Endothelial cell of umbilical vein (primary cell): ENCODE measurements at regions of chr16 and their contacts with region 1.

Region 1: GRCh38 chr16:81996664-81997622 is 14.3 kb downstream of the SDR42E1 start:
- DNase-seq: peak; percentile 90
- H3K4me3 ChIP-seq: peak overlapping the region in 1 of 3 experiments; percentile 33
- H3K27ac ChIP-seq: peak overlapping the region; percentile 96
- H3K4me1 ChIP-seq: peaks cover 41% of the 10 kb centered on the region
- H3K27me3 ChIP-seq: no peaks in the 10 kb centered on the region
- CTCF ChIP-seq: peak; percentile 34 to 39
- POLR2A ChIP-seq: no peak

Region 2: GRCh38 chr16:81885976-81886586 is 110.9 kb before region 1 on chr16:
- CTCF ChIA-PET with region 1: interaction called, 15 read pairs
- POLR2A ChIA-PET with region 1: no interaction called
- dilution Hi-C with region 1: no loop called
- intact Hi-C with region 1: loop called (anchors 1 kb)
- DNase-seq: peak; percentile 40
- H3K4me3 ChIP-seq: no peak overlapping the region
- H3K27ac ChIP-seq: no peak overlapping the region
- H3K4me1 ChIP-seq: no peaks in the 10 kb centered on the region
- H3K27me3 ChIP-seq: no peaks in the 10 kb centered on the region
- CTCF ChIP-seq: peak; percentile 73 to 78
- POLR2A ChIP-seq: no peak

Region 3: DNA sequence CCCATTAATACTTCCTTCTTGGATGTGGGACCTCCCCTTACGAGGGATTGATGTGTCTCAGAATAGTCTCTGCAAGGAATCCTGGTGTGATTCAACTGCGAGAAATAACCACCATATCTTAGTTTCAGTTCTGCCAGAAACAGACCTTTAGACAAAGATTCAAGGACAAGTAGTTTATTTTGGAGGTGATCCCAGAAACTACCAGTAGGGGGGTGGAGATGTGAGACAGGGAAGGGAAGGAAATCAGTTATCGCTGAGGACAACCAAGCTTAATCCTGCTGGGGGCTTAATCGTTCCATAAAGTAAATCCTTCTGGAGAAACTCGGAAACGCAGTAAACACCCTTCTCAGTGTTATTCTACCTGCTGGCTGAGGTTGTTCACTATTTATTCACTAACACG is 19.3 kb after region 1 on chr16:
- CTCF ChIA-PET with region 1: interaction called, 20 read pairs
- POLR2A ChIA-PET with region 1: no interaction called
- dilution Hi-C with region 1: no loop called
- intact Hi-C with region 1: loop called (anchors 1 kb)
- DNase-seq: peak; percentile 90
- H3K4me3 ChIP-seq: peak overlapping the region in 1 of 3 experiments; percentile 45
- H3K27ac ChIP-seq: no peak overlapping the region
- H3K4me1 ChIP-seq: peaks cover 9% of the 10 kb centered on the region
- H3K27me3 ChIP-seq: peaks cover 4 to 15% of the 10 kb centered on the region in 2 experiments
- CTCF ChIP-seq: peak; percentile 52 to 58
- POLR2A ChIP-seq: no peak

Region 4: GRCh38 chr16:82061861-82062525 is 65.0 kb after region 1 on chr16:
- CTCF ChIA-PET with region 1: interaction called, 26 read pairs
- POLR2A ChIA-PET with region 1: no interaction called
- dilution Hi-C with region 1: no loop called
- intact Hi-C with region 1: loop called (anchors 1 kb)
- DNase-seq: peak; percentile 55
- H3K4me3 ChIP-seq: no peak overlapping the region
- H3K27ac ChIP-seq: no peak overlapping the region
- H3K4me1 ChIP-seq: no peaks in the 10 kb centered on the region
- H3K27me3 ChIP-seq: peaks cover 11 to 20% of the 10 kb centered on the region in 2 experiments
- CTCF ChIP-seq: peak; percentile 51 to 59
- POLR2A ChIP-seq: no peak

Region 5: GRCh38 chr16:82129881-82130280 is 132.9 kb after region 1 on chr16:
- CTCF ChIA-PET with region 1: no interaction called
- POLR2A ChIA-PET with region 1: no interaction called
- dilution Hi-C with region 1: no loop called
- intact Hi-C with region 1: no loop called
- DNase-seq: no peak
- H3K4me3 ChIP-seq: no peak overlapping the region
- H3K27ac ChIP-seq: no peak overlapping the region
- H3K4me1 ChIP-seq: no peaks in the 10 kb centered on the region
- H3K27me3 ChIP-seq: no peaks in the 10 kb centered on the region
- CTCF ChIP-seq: no peak
- POLR2A ChIP-seq: no peak

Region 6: DNA sequence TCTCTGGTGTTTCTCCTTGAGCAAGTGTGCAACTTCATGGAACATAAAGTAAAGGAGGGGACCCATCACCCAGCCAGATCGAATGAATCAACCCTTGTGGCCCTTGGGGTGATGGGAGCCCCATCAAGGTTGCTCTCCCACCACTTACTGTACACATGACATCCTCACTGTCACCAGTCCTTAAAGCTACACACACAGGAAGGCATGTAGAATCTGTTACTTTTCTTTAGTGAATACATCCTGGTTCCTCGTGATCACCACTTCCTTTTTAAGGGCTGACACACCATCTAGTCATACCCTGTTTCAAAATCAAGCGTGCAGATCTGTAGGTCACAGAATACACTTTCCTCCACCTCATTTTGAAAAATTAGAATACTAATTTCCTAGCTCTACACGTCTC is 195.7 kb after region 1 on chr16:
- CTCF ChIA-PET with region 1: no interaction called
- POLR2A ChIA-PET with region 1: no interaction called
- dilution Hi-C with region 1: no loop called
- intact Hi-C with region 1: loop called (anchors 2 kb)
- DNase-seq: peak; percentile 86
- H3K4me3 ChIP-seq: no peak overlapping the region
- H3K27ac ChIP-seq: peak overlapping the region; percentile 59
- H3K4me1 ChIP-seq: peaks cover 30% of the 10 kb centered on the region
- H3K27me3 ChIP-seq: no peaks in the 10 kb centered on the region
- CTCF ChIP-seq: no peak
- POLR2A ChIP-seq: peak; percentile 56